Activated CD4-positive, alpha-beta T cell treated with anti-CD3 and anti-CD28 coated beads, Interleukin-2, amount 10 ng/mL, durations not matched to agents 7 days and 5 days (primary cell): ENCODE measurements at regions of chr12 and their contacts with region 1.

Region 1: DNA sequence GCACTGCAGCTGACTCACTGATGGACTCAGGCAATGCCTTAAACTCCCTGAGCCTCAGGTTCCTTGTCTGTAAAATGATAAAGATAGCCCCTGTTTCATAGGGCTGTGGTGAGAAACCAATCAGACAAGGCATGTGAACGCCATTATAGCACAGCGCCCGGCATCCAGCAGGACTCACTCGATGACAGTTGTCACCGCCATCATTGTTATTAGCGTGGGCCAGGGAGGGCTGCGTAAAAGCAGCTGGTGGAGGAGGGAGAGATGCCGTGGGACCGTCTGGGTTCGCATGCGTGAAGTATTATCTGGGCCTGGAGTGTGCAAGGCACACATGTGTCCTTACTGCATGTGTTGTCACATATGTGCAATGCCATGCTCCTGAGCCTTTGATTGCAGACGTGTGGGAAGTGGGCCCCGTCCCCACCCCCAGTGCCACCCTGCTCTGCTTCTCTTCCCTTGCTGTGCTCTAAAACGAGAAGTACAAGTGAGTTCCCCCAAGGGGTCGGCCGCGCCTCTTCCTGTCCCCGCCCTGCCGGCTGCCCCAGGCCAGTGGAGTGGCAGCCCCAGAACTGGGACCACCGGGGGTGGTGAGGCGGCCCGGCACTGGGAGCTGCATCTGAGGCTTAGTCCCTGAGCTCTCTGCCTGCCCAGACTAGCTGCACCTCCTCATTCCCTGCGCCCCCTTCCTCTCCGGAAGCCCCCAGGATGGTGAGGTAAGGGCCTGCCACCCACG is at the start of gene PTPN6:
- DNase-seq: peak; percentile 68
- H3K4me3 Mint-ChIP-seq: peak within 1 kb of the TSS; percentile 100
- H3K27ac Mint-ChIP-seq: peak within 1 kb of the TSS; percentile 98
- H3K4me1 Mint-ChIP-seq: peaks cover 64% of the 10 kb centered on the region
- H3K27me3 Mint-ChIP-seq: no peaks in the 10 kb centered on the region
- total RNA-seq, gene PTPN6: 346 to 354 TPM

Region 2: GRCh38 chr12:6937481-6938297 is 13.3 kb before region 1 on chr12:
- CTCF ChIA-PET with region 1: interaction called, 388 read pairs
- POLR2A ChIA-PET with region 1: interaction called, 3 read pairs
- DNase-seq: peak; percentile 95
- H3K4me3 Mint-ChIP-seq: peak overlapping the region; percentile 81
- H3K27ac Mint-ChIP-seq: peak overlapping the region; percentile 97
- H3K4me1 Mint-ChIP-seq: peaks cover 59% of the 10 kb centered on the region
- H3K27me3 Mint-ChIP-seq: no peaks in the 10 kb centered on the region